Posterior vena cava (tissue), 2 donors: ENCODE measurements at regions of chr5 and their contacts with region 1.

Region 1: GRCh38 chr5:64273276-64273675 is 107.6 kb downstream of the RNF180 start:
- DNase-seq: no peak

Region 2: GRCh38 chr5:64295101-64295500 is 21.8 kb after region 1 on chr5:
- intact Hi-C with region 1: loop called in 1 of 2 experiments (anchors 1 kb)
- DNase-seq: no peak

Region 3: DNA sequence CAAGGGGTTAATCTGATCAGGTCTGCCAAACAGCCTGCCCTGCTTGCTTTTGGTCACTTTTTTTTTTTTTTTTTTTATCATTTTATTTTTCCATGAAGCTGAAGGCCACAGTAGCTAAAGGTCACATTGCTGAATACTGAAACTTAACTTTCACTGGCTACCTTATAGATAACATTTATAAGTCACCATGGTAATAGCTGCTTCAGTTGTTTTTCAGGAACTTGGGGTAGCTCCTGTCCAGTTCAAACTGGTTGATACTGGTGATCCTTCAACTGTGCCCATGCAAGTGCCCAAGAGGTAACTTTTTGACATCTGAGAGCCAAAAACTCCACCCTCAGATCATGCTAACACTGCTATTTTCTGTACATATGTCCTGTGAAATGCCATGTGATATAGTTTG is 164.2 kb after region 1 on chr5:
- intact Hi-C with region 1: no loop called
- DNase-seq: no peak